ENCODE measurements at regions of chr6 and their contacts with region 1.

Region 1: GRCh38 chr6:129370268-129370916 is 339.6 kb downstream of the ARHGAP18 start:
- DNase-seq: no peak
- H3K4me3 ChIP-seq: peak overlapping the region in 2 of 4 donors; percentile 1 to 15
- H3K27ac ChIP-seq: no peak overlapping the region
- H3K4me1 ChIP-seq: peaks cover 0 to 8% (median 2%) of the 10 kb centered on the region in 4 donors
- H3K27me3 ChIP-seq: no peaks in the 10 kb centered on the region
- CTCF ChIP-seq: peak; percentile 7 to 54 (median 41)
- EP300 ChIP-seq: no peak
- POLR2A ChIP-seq: no peak

Region 2: GRCh38 chr6:128725271-128726233 is 644.8 kb before region 1 on chr6:
- intact Hi-C with region 1: loop called (anchors 10 kb)
- DNase-seq: no peak
- H3K4me3 ChIP-seq: no peak overlapping the region
- H3K27ac ChIP-seq: no peak overlapping the region
- H3K4me1 ChIP-seq: no peaks in the 10 kb centered on the region
- H3K27me3 ChIP-seq: no peaks in the 10 kb centered on the region
- CTCF ChIP-seq: peak in 3 of 4 experiments; percentile 6 to 45 (median 28)
- EP300 ChIP-seq: no peak
- POLR2A ChIP-seq: no peak

Region 3: GRCh38 chr6:129186988-129187387 is 183.4 kb before region 1 on chr6:
- intact Hi-C with region 1: no loop called
- DNase-seq: no peak
- H3K4me3 ChIP-seq: no peak overlapping the region
- H3K27ac ChIP-seq: no peak overlapping the region
- H3K4me1 ChIP-seq: no peaks in the 10 kb centered on the region
- H3K27me3 ChIP-seq: no peaks in the 10 kb centered on the region
- CTCF ChIP-seq: no peak
- EP300 ChIP-seq: no peak
- POLR2A ChIP-seq: no peak